ENCODE measurements at regions of chr2 and their contacts with region 1.

Region 1: DNA sequence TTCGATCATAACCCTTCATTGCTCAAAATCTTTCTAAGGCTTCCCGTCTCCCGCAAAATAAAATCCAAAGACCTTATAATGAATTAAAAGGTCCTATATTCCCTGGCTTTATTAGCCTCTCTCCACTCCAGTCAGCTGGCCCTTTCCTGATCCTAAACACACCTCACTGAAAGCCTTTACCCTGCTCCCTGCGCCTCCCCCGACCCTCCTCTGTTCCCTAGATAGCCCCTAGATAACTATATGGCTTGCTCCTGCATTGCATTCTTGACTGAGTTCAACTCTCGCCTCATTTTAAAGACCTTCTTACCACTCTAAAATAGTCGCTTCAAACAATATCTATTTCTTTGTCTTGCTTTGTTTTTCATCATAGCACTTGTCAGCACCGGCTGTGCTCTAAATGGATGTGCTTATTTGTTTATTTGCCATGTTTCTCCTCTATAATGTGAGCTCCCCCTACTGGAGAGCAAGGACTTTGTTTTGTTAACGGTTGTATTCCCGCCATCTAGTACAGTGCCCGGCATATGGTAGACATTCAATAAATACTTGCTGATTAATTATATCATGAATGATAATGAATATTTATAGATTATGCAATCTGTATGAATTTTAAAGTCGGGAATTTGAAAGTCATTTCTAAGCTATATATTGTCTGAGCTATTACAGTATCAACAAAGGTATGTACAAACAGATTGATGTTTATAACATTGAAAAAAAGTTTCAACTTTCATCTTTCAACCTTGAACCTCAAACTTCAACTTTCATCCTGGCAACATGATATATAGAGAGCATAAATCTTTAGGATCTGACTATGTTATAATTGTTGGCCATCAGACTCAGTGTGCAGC is 32.4 kb upstream of the VIT start:
- DNase-seq: no peak
- ATAC-seq: peak; percentile 87

Region 2: GRCh38 chr2:36355151-36355889 is 308.8 kb before region 1 on chr2 and contains the start of gene CRIM1:
- intact Hi-C with region 1: loop called (anchors 10 kb)
- DNase-seq: peak; percentile 93
- ATAC-seq: peak; percentile 85
- total RNA-seq, gene CRIM1: 209 TPM